BJ (cell line): ENCODE measurements at regions of chr17 and their contacts with region 1.

Region 1: GRCh38 chr17:50841949-50842354 is 6.6 kb downstream of the WFIKKN2 start:
- DNase-seq: no peak
- H3K4me3 ChIP-seq: no peak overlapping the region
- H3K27me3 ChIP-seq: no peaks in the 10 kb centered on the region
- CTCF ChIP-seq: peak; percentile 87

Region 2: GRCh38 chr17:50828508-50829170 is 13.3 kb before region 1 on chr17:
- CTCF ChIA-PET with region 1: interaction called, 19 read pairs
- POLR2A ChIA-PET with region 1: no interaction called
- DNase-seq: no peak
- H3K4me3 ChIP-seq: no peak overlapping the region
- H3K27me3 ChIP-seq: no peaks in the 10 kb centered on the region
- CTCF ChIP-seq: no peak

Region 3: DNA sequence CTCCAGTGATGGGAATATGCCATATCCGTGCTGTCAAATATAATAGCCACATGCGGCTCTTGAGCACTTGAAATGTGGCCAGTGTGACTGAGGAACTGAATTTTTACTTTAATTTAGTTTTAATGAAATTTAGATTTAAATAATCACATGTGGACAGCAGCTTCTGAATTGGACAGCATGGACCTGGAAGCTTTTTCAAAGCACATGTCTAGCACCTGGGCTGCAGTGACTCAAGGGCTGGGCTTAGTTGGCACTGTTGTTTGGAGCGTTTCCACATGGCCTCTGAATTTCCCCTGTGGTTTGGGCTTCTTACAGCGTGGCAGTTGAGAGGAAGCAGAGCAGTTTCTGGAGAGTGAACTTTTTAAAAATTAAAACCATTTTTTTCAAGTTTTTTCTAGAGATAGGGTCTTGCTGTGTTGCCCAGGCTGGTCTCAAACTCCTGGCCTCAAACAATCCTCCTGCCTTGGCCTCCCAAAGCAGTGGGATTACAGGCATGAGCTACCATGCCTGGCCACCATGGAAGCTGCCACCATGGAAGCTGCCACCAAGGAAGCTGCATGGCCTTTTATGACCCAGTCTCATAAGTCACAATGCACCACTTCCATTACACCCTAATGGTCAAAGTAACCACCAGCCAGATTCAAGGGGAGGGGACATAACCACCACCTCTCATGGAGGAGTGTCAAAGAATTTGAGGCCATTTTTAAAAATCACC is 30.9 kb after region 1 on chr17:
- CTCF ChIA-PET with region 1: no interaction called
- POLR2A ChIA-PET with region 1: no interaction called
- DNase-seq: no peak
- H3K4me3 ChIP-seq: no peak overlapping the region
- H3K27me3 ChIP-seq: 0 out of 2 replicates have a peak, but pooled peaks cover 2% of the 10 kb centered on the region
- CTCF ChIP-seq: no peak